ENCODE measurements at regions of chr3 and their contacts with region 1.

Region 1: GRCh38 chr3:27105904-27106303 is 263.3 kb downstream of the NEK10 start:
- DNase-seq: peak; percentile 38
- H3K4me3 Mint-ChIP-seq: no peak overlapping the region
- H3K27ac Mint-ChIP-seq: no peak overlapping the region
- H3K4me1 Mint-ChIP-seq: no peaks in the 10 kb centered on the region
- H3K27me3 Mint-ChIP-seq: no peaks in the 10 kb centered on the region
- CTCF ChIP-seq: peak; percentile 35

Region 2: DNA sequence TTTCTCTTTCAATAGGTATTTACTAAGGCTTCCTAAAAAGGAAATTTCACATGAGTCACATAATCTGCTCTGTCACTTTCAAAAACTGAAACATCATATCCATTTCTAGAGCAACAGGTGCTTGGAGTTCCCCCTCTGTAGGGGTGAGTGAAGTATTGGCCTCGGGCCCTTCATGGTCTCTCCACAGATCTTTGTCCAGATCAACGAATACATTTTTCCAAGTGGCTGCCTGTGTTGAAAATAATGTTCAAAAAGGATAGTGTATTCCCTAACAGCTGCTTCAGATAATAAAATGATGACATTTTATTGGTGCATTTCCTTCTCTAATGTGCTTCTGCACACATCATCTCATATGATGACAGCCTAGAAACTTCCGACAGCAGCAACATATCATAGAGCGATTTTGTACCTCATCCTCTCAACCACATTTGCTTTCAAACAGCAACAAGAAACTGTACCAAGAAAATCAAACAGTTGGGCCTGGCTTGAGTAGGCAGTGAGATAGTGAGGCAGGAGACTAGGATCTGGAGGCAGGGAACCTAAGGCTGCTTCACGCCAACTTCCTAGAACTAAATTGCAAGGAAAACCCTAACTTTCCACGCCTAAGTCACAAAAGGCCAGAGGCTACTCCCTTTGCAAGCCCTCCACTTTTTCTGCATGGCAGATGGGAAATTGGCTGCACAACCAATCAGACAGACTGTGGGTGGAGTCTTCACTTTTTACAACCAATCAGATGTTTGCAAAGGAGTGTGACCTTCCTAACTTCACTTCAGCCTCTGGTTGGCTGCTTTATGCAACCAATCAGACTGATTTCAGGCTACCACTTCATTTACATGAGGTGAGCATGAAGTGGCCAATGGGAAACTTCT is 143.2 kb before region 1 on chr3:
- CTCF ChIA-PET with region 1: no interaction called
- intact Hi-C with region 1: loop called (anchors 5 kb)
- DNase-seq: no peak
- H3K4me3 Mint-ChIP-seq: no peak overlapping the region
- H3K27ac Mint-ChIP-seq: no peak overlapping the region
- H3K4me1 Mint-ChIP-seq: no peaks in the 10 kb centered on the region
- H3K27me3 Mint-ChIP-seq: no peaks in the 10 kb centered on the region
- CTCF ChIP-seq: no peak

Region 3: DNA sequence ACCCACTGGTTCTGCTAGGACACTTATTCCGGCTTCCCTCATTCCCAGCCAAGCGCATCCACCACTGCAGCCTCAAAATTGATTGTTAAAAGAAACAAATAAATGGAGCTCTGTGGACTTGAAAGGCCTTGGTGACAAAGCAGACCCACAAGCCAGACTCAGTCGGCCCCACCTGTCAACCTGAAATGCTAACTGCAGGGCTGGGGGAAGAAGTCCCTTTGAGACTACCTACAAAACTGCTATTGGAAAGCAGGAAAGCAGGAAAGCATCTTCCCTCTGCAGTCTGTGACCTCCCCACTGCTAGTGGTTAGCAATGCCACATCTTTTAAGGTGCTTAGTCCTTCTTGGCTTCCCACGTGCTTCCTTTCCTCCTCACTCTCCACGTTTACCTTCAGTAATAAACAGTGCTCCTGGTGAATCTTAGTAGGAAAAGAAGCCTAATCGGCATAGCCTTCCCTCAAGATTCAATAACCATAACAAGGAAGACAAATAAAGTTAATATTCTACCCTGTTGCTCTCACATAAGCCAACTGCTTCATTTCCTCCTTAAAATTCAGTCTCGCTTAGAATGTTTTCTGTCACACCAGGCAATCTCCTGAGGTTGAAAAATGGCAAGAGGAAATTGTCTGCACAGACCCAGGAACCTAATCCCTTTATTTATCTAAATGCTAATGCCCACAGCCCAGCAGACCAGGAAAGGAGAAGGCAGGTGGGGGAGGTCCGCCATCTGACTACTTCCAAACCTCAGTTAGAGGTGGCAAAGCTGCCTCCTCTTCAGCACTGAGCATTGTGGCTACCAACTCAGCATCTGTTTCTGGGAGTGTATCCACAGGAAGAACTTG is 32.9 kb before region 1 on chr3:
- CTCF ChIA-PET with region 1: no interaction called
- intact Hi-C with region 1: no loop called
- DNase-seq: no peak
- H3K4me3 Mint-ChIP-seq: no peak overlapping the region
- H3K27ac Mint-ChIP-seq: no peak overlapping the region
- H3K4me1 Mint-ChIP-seq: no peaks in the 10 kb centered on the region
- H3K27me3 Mint-ChIP-seq: no peaks in the 10 kb centered on the region
- CTCF ChIP-seq: no peak

Region 4: GRCh38 chr3:27387625-27388024 is 281.7 kb after region 1 on chr3:
- CTCF ChIA-PET with region 1: no interaction called
- intact Hi-C with region 1: no loop called
- DNase-seq: no peak
- H3K4me3 Mint-ChIP-seq: no peak overlapping the region
- H3K27ac Mint-ChIP-seq: no peak overlapping the region
- H3K4me1 Mint-ChIP-seq: peaks cover 7% of the 10 kb centered on the region
- H3K27me3 Mint-ChIP-seq: no peaks in the 10 kb centered on the region
- CTCF ChIP-seq: no peak